OCI-LY7 (cell line): ENCODE measurements at regions of chr9 and their contacts with region 1.

Region 1: DNA sequence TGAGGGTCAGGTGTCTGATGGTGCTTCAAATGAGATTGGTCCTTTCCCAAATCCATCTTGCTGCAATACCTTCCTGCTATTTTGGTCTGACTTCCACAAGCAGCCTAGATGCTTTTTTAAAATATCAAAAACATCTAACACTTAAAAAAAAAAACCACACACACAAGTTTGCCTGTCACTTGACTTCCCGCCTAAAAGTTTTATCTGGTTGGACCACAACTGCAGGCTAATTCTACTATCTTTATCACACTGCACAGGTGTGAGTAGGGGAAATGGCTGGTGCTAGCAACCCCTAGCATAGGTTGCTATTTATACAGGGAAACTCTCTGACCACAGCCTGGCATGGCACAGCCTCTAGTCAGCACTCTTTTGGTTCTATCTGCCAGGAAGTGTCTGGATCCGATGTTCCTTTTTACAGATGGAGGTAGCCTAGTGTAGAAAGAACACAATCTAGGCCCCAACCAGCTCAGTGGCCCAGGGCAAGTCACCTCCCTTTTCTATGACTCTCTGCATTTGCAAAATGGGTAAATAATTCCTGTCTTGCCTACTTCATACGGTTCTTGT is at the start of gene HEMGN:
- DNase-seq: peak; percentile 92
- H3K4me3 ChIP-seq: peak within 1 kb of the TSS; percentile 60
- H3K27ac ChIP-seq: peak within 1 kb of the TSS; percentile 91
- H3K4me1 ChIP-seq: peaks cover 93% of the 10 kb centered on the region
- CTCF ChIP-seq: no peak; the same call in 1 of the 2 replicates
- total RNA-seq, gene HEMGN: 4.3 and 5.4 TPM in 2 replicates

Region 2: GRCh38 chr9:97954550-97954989 is 16.4 kb after region 1 on chr9:
- CTCF ChIA-PET with region 1: no interaction called
- POLR2A ChIA-PET with region 1: interaction called, 22 read pairs
- intact Hi-C with region 1: no loop called
- DNase-seq: peak; percentile 90
- H3K4me3 ChIP-seq: no peak overlapping the region
- H3K27ac ChIP-seq: peak overlapping the region; percentile 7
- H3K4me1 ChIP-seq: peaks cover 26% of the 10 kb centered on the region
- CTCF ChIP-seq: peak; percentile 93

Region 3: GRCh38 chr9:98108531-98109031 is 170.4 kb after region 1 on chr9:
- CTCF ChIA-PET with region 1: no interaction called
- POLR2A ChIA-PET with region 1: no interaction called
- intact Hi-C with region 1: loop called (anchors 5 kb)
- DNase-seq: peak; percentile 83
- H3K4me3 ChIP-seq: peak overlapping the region; percentile 1
- H3K27ac ChIP-seq: peak overlapping the region; percentile 92
- H3K4me1 ChIP-seq: peaks cover 64% of the 10 kb centered on the region
- CTCF ChIP-seq: no peak